ENCODE measurements at regions of chr6 and their contacts with region 1.

Region 1: GRCh38 chr6:11585426-11586016 is 48.0 kb downstream of the TMEM170B start:
- DNase-seq: no peak
- H3K4me3 Mint-ChIP-seq: no peak overlapping the region
- H3K27ac Mint-ChIP-seq: no peak overlapping the region
- H3K4me1 Mint-ChIP-seq: no peaks in the 10 kb centered on the region
- H3K27me3 Mint-ChIP-seq: peaks cover 8% of the 10 kb centered on the region

Region 2: DNA sequence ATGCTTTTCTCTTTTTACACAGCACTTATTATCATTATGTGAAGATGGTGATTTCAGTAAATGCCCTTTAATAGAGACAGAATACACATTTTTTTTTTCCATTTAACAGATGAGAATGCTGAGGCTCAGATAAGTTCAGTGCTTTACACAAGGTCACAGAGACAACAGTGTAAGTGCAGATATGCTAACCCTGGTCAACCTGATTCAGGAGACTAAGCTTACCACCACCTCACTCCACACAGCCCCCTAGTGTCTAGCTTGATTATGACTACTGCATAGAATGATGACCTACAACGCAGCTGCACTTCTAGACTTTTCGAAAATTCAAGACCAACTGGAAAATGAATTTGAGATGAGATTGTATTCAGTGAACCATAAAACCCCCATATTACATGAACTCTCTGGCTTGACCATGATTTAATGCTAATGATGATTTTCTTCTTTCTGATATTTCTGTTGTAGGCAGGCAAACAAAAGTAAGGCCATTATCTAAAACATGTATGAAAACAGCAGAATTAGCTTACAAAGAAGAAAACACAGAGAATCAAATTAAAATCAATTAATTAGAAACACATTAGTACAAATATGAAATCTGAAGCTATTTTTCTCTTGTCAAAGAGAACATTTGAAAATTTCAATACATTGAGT is 918.9 kb after region 1 on chr6:
- intact Hi-C with region 1: loop called (anchors 10 kb)
- DNase-seq: no peak
- H3K4me3 Mint-ChIP-seq: no peak overlapping the region
- H3K27ac Mint-ChIP-seq: no peak overlapping the region
- H3K4me1 Mint-ChIP-seq: no peaks in the 10 kb centered on the region
- H3K27me3 Mint-ChIP-seq: no peaks in the 10 kb centered on the region

Region 3: DNA sequence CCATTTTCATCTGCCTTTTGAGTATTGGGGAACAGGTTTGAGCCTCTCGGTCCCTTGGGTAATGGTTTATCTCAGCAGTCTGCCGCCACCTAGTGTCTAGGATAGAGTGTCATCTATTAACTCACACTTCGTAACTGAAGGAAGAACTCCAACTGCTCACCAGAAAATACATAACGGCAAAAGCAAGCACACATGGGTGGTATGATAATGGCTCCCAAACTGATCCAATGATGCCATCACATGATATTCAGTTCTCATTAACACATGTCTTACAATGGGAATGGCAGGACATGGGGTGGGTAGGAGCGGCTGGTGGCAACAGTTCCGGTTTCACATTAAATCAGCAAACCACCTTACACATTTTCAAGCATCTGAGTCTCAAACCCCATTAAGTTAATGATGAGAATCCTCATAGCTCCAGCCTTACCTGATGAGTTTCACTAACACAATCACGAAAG is 1020.4 kb after region 1 on chr6:
- intact Hi-C with region 1: loop called (anchors 1 kb)
- DNase-seq: peak; percentile 20
- H3K4me3 Mint-ChIP-seq: no peak overlapping the region
- H3K27ac Mint-ChIP-seq: no peak overlapping the region
- H3K4me1 Mint-ChIP-seq: peaks cover 30% of the 10 kb centered on the region
- H3K27me3 Mint-ChIP-seq: no peaks in the 10 kb centered on the region

Region 4: GRCh38 chr6:12844290-12845223 is 1259.0 kb after region 1 on chr6:
- intact Hi-C with region 1: loop called (anchors 5 kb)
- DNase-seq: no peak
- H3K4me3 Mint-ChIP-seq: no peak overlapping the region
- H3K27ac Mint-ChIP-seq: no peak overlapping the region
- H3K4me1 Mint-ChIP-seq: no peaks in the 10 kb centered on the region
- H3K27me3 Mint-ChIP-seq: no peaks in the 10 kb centered on the region

Region 5: DNA sequence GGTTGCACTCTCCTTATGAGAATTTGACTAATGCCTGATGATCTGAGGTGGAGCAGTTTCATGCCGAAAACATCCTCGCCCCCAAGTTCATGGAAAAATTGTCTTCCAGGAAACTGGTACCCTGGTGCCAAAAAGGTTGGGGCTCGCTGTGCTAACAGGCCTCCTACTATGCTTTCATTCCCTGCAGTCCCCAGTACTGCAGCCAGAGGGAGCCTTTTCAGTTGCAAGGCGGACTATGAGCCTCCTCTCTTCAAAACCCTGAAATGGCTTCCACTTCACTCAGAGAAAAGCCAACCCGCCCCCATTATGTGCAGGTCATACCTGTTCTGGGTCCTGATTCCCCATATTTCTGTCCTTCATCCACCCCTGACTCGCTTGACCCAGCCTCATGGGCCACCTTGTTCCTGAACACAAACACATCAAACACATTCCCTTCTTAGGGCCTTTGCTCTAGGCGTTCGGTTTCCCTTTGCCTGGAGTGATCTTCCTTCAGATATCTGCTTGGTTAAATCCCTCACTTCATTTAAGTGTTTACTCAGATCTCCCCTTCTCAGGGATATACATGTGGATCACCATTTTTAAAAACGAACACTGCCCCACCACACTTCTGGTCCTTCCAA is 1304.8 kb after region 1 on chr6:
- intact Hi-C with region 1: loop called (anchors 1 kb)
- DNase-seq: no peak
- H3K4me3 Mint-ChIP-seq: no peak overlapping the region
- H3K27ac Mint-ChIP-seq: no peak overlapping the region
- H3K4me1 Mint-ChIP-seq: no peaks in the 10 kb centered on the region
- H3K27me3 Mint-ChIP-seq: peaks cover 19% of the 10 kb centered on the region

Measured in activated T-helper 1 cell treated with anti-CD3 and anti-CD28 coated beads, Interleukin-12 subunit alpha, Interleukin-12 subunit beta, Interleukin-2, Interleukin-4 antibody, amounts not matched to agents 30 ng/mL and 10 ng/mL and 1 ng/mL, durations not matched to agents 14 hours and 24 hours and 36 hours (primary cell).